ENCODE measurements at regions of chr2 and their contacts with region 1.

Region 1: GRCh38 chr2:74876081-74876886 is 42.4 kb downstream of the HK2 start:
- DNase-seq: peak in 35 of 42 donors; percentile 6 to 77 (median 40)

Region 2: GRCh38 chr2:74482801-74483674 is 393.2 kb before region 1 on chr2 and contains the starts of genes CCDC142 and TTC31:
- intact Hi-C with region 1: no loop called
- DNase-seq: peak; percentile 90 to 98 (median 96)

Region 3: GRCh38 chr2:74715078-74715791 is 161.0 kb before region 1 on chr2:
- intact Hi-C with region 1: loop called (anchors 2 kb)
- DNase-seq: peak; percentile 57 to 93 (median 83)

Measured in head of caudate nucleus (tissue), 42 donors.